Dorsolateral prefrontal cortex (tissue), 120 donors: ENCODE measurements at regions of chr19 and their contacts with region 1.

Region 1: DNA sequence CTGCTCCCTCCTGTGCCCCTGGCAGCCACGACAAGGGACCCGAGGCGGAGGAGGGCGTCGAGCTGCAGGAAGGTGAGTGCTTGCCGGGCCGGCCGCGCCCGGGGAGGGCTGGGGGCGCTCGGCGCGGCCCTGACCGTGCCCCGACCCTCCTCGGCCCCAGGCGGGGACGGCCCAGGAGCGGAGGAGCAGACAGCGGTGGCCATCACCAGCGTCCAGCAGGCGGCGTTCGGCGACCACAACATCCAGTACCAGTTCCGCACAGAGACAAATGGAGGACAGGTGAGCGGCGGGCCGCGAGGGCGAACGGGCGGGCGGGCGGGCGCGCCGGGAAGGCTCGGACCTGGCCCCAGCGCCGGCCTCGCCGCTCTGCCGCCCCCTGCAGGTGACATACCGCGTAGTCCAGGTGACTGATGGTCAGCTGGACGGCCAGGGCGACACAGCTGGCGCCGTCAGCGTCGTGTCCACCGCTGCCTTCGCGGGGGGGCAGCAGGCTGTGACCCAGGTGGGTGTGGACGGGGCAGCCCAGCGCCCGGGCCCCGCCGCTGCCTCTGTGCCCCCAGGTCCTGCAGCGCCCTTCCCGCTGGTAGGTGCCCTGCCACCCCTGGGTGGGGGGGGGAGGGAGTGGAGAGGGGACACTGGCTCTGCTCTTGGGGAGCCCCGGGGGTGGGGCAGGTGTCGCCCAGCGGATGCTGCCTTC is 807 bp downstream of the USF2 start:
- DNase-seq: peak; percentile 82 to 90 (median 88)
- H3K4me3 ChIP-seq: peak overlapping the region; percentile 49 to 92 (median 70)
- H3K27ac ChIP-seq: peak overlapping the region; percentile 75 to 99 (median 94)
- H3K27me3 ChIP-seq: no peaks in the 10 kb centered on the region
- CTCF ChIP-seq: peak; percentile 42 to 93 (median 75)

Region 2: GRCh38 chr19:34974646-34975045 is 294.9 kb before region 1 on chr19:
- intact Hi-C with region 1: loop called in 1 of 2 experiments (anchors 5 kb)
- DNase-seq: no peak
- H3K4me3 ChIP-seq: no peak overlapping the region
- H3K27ac ChIP-seq: peak overlapping the region in 1 of 59 donors; percentile 20
- H3K27me3 ChIP-seq: no peaks in the 10 kb centered on the region
- CTCF ChIP-seq: no peak

Region 3: GRCh38 chr19:35030257-35031071 is 239.1 kb before region 1 on chr19 and contains the start of gene SCN1B:
- intact Hi-C with region 1: no loop called
- DNase-seq: peak in 8 of 10 donors; percentile 46 to 86 (median 56)
- H3K4me3 ChIP-seq: peak within 1 kb of the TSS; percentile 45 to 78 (median 63)
- H3K27ac ChIP-seq: peak within 1 kb of the TSS in 58 of 59 donors; percentile 33 to 94 (median 85)
- H3K27me3 ChIP-seq: no peaks in the 10 kb centered on the region
- CTCF ChIP-seq: no peak
- total RNA-seq, gene SCN1B: 65.9 to 457 (median 199) TPM

Region 4: GRCh38 chr19:35066691-35067563 is 202.6 kb before region 1 on chr19:
- intact Hi-C with region 1: loop called in 1 of 2 experiments (anchors 10 kb)
- DNase-seq: peak; percentile 87 to 96 (median 92)
- H3K4me3 ChIP-seq: no peak overlapping the region
- H3K27ac ChIP-seq: peak overlapping the region in 49 of 59 donors; percentile 0 to 86 (median 66)
- H3K27me3 ChIP-seq: no peaks in the 10 kb centered on the region
- CTCF ChIP-seq: peak; percentile 86 to 98 (median 94)

Region 5: GRCh38 chr19:35224681-35225571 is 44.6 kb before region 1 on chr19:
- intact Hi-C with region 1: loop called in 1 of 2 experiments (anchors 5 kb)
- DNase-seq: no peak
- H3K4me3 ChIP-seq: peak overlapping the region in 2 of 59 donors; percentile 11 to 19
- H3K27ac ChIP-seq: no peak overlapping the region
- H3K27me3 ChIP-seq: no peaks in the 10 kb centered on the region
- CTCF ChIP-seq: no peak

Region 6: DNA sequence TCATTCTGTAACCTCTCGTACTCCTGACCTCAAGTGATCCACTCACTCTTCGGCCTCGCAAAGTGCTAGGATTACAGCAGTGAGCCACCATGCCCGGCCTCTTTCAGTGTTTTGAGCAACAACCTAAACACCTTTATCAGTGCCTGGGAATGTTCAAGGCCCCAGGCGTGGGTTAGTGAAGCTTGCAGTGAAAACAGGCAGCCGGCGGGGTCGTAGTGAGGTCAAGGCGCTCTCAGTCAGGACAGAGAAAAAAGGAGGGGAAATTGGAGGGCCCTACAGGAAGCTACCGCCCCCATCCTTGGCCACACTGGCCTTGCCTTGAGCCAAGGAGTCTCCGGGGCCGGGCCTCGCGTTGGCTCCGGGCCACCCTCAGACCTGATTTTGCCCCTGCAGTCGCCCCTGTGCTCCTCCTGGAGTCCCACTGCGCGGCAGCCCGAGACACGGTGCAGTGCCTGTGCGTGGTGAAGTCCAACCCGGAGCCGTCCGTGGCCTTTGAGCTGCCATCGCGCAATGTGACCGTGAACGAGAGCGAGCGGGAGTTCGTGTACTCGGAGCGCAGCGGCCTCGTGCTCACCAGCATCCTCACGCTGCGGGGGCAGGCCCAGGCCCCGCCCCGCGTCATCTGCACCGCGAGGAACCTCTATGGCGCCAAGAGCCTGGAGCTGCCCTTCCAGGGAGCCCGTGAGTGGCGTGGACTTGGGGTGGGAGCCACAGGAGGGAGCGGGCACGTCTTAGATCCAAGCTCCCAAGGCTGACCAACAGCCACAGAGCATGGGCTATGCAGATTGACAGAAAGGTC is 40.1 kb after region 1 on chr19:
- intact Hi-C with region 1: loop called in 1 of 2 experiments (anchors 5 kb)
- DNase-seq: no peak
- H3K4me3 ChIP-seq: no peak overlapping the region
- H3K27ac ChIP-seq: peak overlapping the region in 22 of 59 donors; percentile 7 to 74 (median 41)
- H3K27me3 ChIP-seq: no peaks in the 10 kb centered on the region
- CTCF ChIP-seq: no peak

Region 7: GRCh38 chr19:35495107-35496064 is 225.8 kb after region 1 on chr19:
- intact Hi-C with region 1: loop called (anchors 5 kb)
- DNase-seq: peak; percentile 30 to 87 (median 64)
- H3K4me3 ChIP-seq: peak overlapping the region in 32 of 59 donors; percentile 2 to 49 (median 34)
- H3K27ac ChIP-seq: peak overlapping the region in 2 of 59 donors; percentile 34 to 46
- H3K27me3 ChIP-seq: peaks cover 0 to 5% (median 0%) of the 10 kb centered on the region in 45 donors
- CTCF ChIP-seq: peak; percentile 61 to 98 (median 93)